ENCODE measurements at regions of chr12 and their contacts with region 1.

Region 1: GRCh38 chr12:6167327-6168259 is 32.6 kb upstream of the CD9 start:
- DNase-seq: peak; percentile 99
- H3K4me3 ChIP-seq: peak overlapping the region in 1 of 3 experiments; percentile 3
- H3K27ac ChIP-seq: peak overlapping the region; percentile 100
- H3K4me1 ChIP-seq: peaks cover 49% of the 10 kb centered on the region
- H3K27me3 ChIP-seq: no peaks in the 10 kb centered on the region
- CTCF ChIP-seq: no peak
- POLR2A ChIP-seq: peak; percentile 76

Region 2: DNA sequence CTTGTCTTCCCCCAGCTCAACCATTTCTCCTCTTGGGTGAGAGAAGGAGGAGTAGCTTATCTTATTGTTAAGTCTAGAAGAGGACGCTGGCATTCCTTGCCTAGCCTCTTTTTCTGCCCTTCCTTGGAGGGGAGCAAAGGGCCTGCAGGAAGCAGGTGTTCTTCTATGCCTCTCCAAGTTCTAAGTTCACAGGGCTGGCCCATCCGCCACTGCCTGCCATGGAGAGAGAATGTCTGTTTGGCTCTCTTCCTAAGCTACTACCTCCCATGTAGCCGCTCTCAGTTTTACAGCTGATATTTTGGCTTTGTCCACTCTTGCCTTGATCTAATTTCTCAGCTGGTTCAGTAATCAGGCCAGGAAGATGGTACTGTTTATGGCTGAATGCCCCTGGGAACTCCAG is 534.5 kb before region 1 on chr12:
- CTCF ChIA-PET with region 1: no interaction called
- POLR2A ChIA-PET with region 1: no interaction called
- dilution Hi-C with region 1: no loop called
- intact Hi-C with region 1: no loop called
- DNase-seq: no peak
- H3K4me3 ChIP-seq: no peak overlapping the region
- H3K27ac ChIP-seq: no peak overlapping the region
- H3K4me1 ChIP-seq: no peaks in the 10 kb centered on the region
- H3K27me3 ChIP-seq: peaks cover 0 to 2% of the 10 kb centered on the region in 2 experiments
- CTCF ChIP-seq: no peak
- POLR2A ChIP-seq: no peak

Region 3: DNA sequence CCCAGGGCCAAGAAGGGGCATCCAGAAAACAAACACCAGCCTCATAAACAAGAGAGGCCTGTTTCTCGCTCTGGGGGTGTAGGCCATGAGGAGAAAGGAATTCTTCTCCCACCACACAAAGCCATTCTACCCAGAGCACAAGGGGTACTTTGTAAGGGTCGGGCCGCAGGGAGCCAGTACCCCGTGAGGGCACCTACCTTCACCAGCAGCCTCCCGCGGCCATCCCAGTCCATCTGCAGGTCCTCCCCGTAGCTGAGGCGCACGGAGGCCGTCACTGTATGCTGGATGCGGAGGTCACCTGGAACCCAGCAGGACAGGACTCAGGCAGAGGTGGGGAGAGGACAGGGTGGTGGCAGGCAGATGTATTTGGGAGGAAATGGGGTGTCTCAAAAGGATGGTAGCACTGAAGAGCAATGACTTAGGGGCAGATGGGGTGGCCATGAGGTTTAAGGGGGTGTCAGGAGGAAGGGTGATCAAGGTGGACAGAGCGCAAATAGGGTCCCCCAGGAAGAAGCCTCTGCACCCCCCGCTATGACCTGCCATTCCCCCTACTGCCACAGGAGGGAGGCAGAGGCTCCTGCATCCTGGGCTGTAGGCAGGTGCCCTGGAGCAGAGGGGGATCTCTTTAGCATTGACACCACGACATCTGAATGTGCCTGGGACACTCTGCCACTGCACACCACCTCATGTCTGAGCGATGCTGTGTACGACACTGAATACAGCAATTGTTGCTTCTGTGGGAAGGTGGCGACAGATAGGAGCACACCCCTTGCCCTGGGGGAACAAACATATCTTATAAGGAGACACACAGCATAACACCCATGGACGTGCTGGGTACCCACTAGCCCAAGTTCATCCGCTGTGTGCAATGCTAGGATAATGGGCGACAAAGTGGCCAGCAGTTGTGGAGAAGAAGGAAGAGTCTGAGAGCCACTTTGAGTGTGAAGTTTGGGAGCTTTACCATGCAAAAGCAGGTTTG is 104.5 kb before region 1 on chr12:
- CTCF ChIA-PET with region 1: interaction called, 5 read pairs
- POLR2A ChIA-PET with region 1: interaction called, 5 read pairs
- dilution Hi-C with region 1: no loop called
- intact Hi-C with region 1: loop called (anchors 1 kb)
- DNase-seq: no peak
- H3K4me3 ChIP-seq: no peak overlapping the region
- H3K27ac ChIP-seq: no peak overlapping the region
- H3K4me1 ChIP-seq: peaks cover 14% of the 10 kb centered on the region
- H3K27me3 ChIP-seq: no peaks in the 10 kb centered on the region
- CTCF ChIP-seq: peak; percentile 61 to 83
- POLR2A ChIP-seq: peak; percentile 42

Region 4: GRCh38 chr12:6092784-6093722 is 74.5 kb before region 1 on chr12:
- CTCF ChIA-PET with region 1: interaction called, 13 read pairs
- POLR2A ChIA-PET with region 1: interaction called, 10 read pairs
- dilution Hi-C with region 1: no loop called
- intact Hi-C with region 1: loop called (anchors 1 kb)
- DNase-seq: peak; percentile 92
- H3K4me3 ChIP-seq: no peak overlapping the region
- H3K27ac ChIP-seq: peak overlapping the region; percentile 60
- H3K4me1 ChIP-seq: peaks cover 87% of the 10 kb centered on the region
- H3K27me3 ChIP-seq: no peaks in the 10 kb centered on the region
- CTCF ChIP-seq: peak in 1 of 2 donors; percentile 14
- POLR2A ChIP-seq: no peak

Region 5: DNA sequence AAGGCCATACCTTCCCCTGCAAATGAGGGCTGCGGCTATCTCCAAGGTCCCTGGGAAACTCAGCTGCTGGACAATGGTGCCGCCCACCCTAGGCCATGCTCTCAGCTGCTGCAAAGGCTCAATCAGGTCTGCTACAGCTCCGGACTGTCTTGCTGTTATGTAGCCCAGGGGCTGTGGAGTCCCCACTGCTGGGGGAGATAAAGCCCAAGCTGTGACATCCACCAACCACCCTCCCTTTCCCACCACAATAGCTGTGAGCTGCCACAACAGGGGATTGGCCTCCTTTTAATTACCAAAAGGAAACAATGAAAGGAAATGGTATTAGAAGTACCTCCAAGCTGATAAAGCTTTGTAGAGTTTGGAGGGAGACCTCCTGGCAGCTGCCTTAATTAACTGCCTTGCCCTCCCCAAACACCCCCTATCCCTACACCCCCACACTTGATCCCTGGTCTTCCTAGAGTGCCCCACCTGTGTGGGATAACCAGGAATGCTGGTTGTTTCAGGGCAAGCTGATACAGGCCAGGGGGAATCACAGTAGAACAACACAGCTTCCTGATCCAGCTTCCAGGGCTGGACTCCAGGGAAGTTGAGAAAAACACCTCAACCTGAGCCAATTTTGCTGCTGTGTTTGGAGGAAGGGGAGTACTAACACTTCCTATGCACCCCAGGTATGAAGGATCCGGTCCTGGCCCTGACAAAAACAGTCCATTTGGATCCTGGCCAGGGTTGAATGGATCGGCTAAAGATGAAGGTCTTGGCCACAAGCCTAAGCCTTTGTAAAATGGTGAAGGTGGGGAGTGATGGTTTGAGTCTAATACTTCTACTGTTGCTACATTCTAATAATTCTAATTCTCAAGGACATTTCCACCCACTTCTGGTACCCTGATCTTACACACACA is 42.9 kb before region 1 on chr12 and contains the start of gene VWF:
- CTCF ChIA-PET with region 1: interaction called, 43 read pairs
- POLR2A ChIA-PET with region 1: interaction called, 24 read pairs
- dilution Hi-C with region 1: no loop called
- intact Hi-C with region 1: loop called (anchors 1 kb)
- DNase-seq: peak; percentile 90
- H3K4me3 ChIP-seq: peak within 1 kb of the TSS; percentile 17 to 93 (median 79)
- H3K27ac ChIP-seq: peak within 1 kb of the TSS; percentile 100
- H3K4me1 ChIP-seq: peaks cover 45% of the 10 kb centered on the region
- H3K27me3 ChIP-seq: no peaks in the 10 kb centered on the region
- CTCF ChIP-seq: no peak
- POLR2A ChIP-seq: peak; percentile 96
- total RNA-seq, gene VWF: 1,882 and 2,328 TPM in 2 replicates

Region 6: DNA sequence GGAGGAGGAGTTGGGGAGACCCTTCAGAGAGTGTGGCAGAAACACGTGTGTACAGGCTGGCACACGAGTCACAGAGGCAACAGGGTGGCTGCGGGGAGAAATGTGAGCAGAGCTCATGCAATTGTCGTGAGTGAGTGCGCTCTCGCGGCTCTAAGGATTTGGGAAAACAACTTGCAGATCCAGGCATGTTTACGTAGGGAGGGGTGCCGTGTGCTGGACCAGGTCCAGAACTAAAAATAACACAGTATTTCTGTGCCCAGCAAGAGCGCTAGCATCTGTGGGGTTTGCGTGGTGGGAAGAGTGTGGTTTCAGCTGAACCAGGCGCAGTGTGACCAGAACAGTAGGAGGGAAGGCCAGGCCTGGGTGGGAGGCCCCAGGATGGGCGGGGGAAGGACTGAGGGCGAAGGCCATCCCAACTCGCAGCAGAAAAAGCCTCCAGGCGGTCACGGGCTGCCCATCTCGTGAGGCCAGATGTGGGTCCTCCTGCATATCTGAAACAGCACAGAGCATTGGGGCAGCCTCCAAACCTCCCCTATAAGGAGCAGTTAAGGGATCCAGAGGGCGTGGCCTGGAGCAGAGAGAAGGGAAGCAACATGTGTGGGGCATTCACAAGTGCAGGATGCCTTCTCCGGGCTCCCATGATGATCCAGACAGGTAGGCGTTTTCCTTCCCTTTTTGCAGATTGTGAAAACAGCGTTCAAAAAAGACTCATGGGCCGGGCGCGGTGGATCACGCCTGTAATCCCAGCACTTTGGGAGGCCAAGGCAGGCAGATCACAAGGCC is 14.7 kb after region 1 on chr12:
- CTCF ChIA-PET with region 1: interaction called, 9 read pairs
- POLR2A ChIA-PET with region 1: interaction called, 6 read pairs
- dilution Hi-C with region 1: no loop called
- intact Hi-C with region 1: loop called (anchors 1 kb)
- DNase-seq: peak; percentile 89
- H3K4me3 ChIP-seq: no peak overlapping the region
- H3K27ac ChIP-seq: peak overlapping the region; percentile 96
- H3K4me1 ChIP-seq: peaks cover 53% of the 10 kb centered on the region
- H3K27me3 ChIP-seq: no peaks in the 10 kb centered on the region
- CTCF ChIP-seq: no peak
- POLR2A ChIP-seq: peak; percentile 52